A549 (cell line): ENCODE measurements at regions of chr2 and their contacts with region 1.

Region 1: DNA sequence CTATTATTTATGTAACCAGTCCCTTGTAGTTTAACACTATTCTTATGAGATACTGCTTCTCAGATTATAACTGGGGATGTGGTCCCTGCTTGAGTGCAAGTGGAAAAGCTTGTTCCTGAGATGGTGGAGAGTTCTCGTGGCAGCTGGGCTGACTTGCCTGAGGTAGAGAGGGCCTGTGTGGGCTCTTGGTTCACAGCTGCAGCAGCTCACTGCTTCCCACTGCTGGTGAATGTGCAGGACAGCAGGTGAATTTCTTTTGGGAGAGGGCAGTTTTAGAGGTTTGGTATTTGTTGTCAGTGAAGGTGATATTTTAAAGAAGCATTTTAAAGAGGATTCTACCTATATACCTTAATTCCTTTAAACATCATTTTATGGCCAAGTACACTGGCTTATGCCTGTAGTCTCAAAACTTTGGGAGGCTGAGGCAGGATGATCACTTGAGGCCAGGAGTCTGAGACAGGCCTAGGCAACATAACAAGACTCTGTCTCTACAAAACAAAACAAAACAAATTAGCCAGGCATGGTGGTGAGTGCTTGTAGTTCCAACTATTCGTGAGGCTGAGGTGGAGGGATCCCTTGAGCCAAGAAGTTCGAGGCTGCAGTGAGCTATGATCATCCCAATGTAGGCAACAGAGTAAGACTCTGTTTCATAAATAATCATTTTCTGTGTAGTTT is 94.8 kb downstream of the MTA3 start:
- DNase-seq: peak; percentile 78 to 81
- ATAC-seq: peak; percentile 97 to 98
- H3K4me3 ChIP-seq: no peak overlapping the region
- H3K27ac ChIP-seq: no peak overlapping the region
- H3K4me1 ChIP-seq: no peaks in the 10 kb centered on the region
- CTCF ChIP-seq: peak; percentile 99
- EP300 ChIP-seq: no peak
- POLR2A ChIP-seq: no peak
- RAD21 ChIP-seq: peak; percentile 94 to 95

Region 2: GRCh38 chr2:42494355-42495233 is 168.6 kb before region 1 on chr2:
- CTCF ChIA-PET with region 1: interaction called, 31 read pairs
- POLR2A ChIA-PET with region 1: interaction called, 3 read pairs
- DNase-seq: peak; percentile 78 to 91
- ATAC-seq: peak; percentile 67 to 85
- H3K4me3 ChIP-seq: peak overlapping the region; percentile 68
- H3K27ac ChIP-seq: peak overlapping the region; percentile 71 to 88
- H3K4me1 ChIP-seq: peaks cover 8% of the 10 kb centered on the region; the same call in 1 of the 3 replicates
- CTCF ChIP-seq: peak; percentile 98
- EP300 ChIP-seq: no peak
- POLR2A ChIP-seq: no peak
- RAD21 ChIP-seq: peak; percentile 87 to 89

Region 3: DNA sequence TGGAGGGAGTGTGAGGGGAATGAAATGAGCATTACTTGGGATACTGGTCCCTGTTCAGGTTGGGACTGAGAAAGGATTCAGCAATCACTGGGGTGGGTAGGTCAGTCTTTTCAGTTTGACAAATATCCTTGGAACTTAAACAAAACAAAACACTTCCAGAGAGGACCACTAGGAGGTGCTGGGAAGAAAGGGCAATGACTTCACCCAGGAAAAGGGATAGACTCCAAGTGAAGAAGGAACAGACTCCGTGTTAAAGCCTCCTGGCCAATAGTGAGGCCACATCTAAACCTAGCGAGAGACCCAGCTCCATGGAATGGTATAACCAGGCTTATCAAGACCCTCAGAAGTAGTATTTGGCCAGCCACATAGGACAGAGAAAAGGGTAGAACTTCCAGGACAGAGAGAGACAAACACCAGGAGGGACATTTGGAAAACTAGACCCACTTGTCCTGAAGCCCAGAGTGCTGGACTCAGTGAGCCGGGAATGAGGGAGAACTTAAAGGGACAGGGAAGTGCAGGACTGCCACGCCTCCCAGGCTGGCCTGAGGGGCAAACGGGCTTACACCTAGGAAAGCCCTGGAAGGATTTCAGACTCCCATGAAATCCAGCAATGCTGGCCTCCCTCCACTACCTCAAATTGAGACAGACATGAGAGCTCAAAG is 149.9 kb before region 1 on chr2:
- CTCF ChIA-PET with region 1: interaction called, 39 read pairs
- POLR2A ChIA-PET with region 1: no interaction called
- DNase-seq: peak; percentile 67 to 76
- ATAC-seq: peak; percentile 71 to 92
- H3K4me3 ChIP-seq: no peak overlapping the region
- H3K27ac ChIP-seq: no peak overlapping the region
- H3K4me1 ChIP-seq: no peaks in the 10 kb centered on the region
- CTCF ChIP-seq: peak; percentile 63
- EP300 ChIP-seq: no peak
- POLR2A ChIP-seq: no peak
- RAD21 ChIP-seq: peak; percentile 58 to 70

Region 4: DNA sequence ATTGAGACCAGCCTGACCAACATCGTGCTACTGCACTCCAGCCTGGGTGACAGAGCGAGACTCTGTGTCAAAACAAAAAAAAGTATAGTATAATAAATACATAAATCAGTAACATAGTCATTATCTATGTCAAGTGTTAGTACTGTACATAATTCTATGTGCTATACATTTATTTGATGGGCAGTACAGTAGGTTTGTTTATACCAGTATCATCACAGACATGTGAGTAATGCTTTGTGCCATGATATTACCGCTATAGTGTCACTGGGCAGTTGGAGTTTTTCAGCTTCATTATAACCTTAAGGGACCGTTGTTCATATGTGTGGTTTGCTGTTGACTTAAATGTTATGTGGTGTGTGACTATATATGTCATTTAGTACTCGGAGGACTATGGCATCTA is 70.0 kb before region 1 on chr2:
- CTCF ChIA-PET with region 1: interaction called, 10 read pairs
- POLR2A ChIA-PET with region 1: no interaction called
- DNase-seq: no peak
- ATAC-seq: no peak
- H3K4me3 ChIP-seq: no peak overlapping the region
- H3K27ac ChIP-seq: no peak overlapping the region
- H3K4me1 ChIP-seq: no peaks in the 10 kb centered on the region
- CTCF ChIP-seq: no peak
- EP300 ChIP-seq: no peak
- POLR2A ChIP-seq: no peak
- RAD21 ChIP-seq: no peak

Region 5: GRCh38 chr2:42613281-42614064 is 49.8 kb before region 1 on chr2:
- CTCF ChIA-PET with region 1: no interaction called
- POLR2A ChIA-PET with region 1: no interaction called
- DNase-seq: no peak
- ATAC-seq: no peak
- H3K4me3 ChIP-seq: no peak overlapping the region
- H3K27ac ChIP-seq: no peak overlapping the region
- H3K4me1 ChIP-seq: peaks cover 16% of the 10 kb centered on the region
- CTCF ChIP-seq: no peak
- EP300 ChIP-seq: no peak
- POLR2A ChIP-seq: no peak
- RAD21 ChIP-seq: no peak

Region 6: GRCh38 chr2:42652086-42652485 is 11.2 kb before region 1 on chr2:
- CTCF ChIA-PET with region 1: interaction called, 44 read pairs
- POLR2A ChIA-PET with region 1: no interaction called
- DNase-seq: no peak
- ATAC-seq: no peak
- H3K4me3 ChIP-seq: no peak overlapping the region
- H3K27ac ChIP-seq: no peak overlapping the region
- H3K4me1 ChIP-seq: no peaks in the 10 kb centered on the region
- CTCF ChIP-seq: no peak
- EP300 ChIP-seq: no peak
- POLR2A ChIP-seq: no peak
- RAD21 ChIP-seq: no peak

Region 7: DNA sequence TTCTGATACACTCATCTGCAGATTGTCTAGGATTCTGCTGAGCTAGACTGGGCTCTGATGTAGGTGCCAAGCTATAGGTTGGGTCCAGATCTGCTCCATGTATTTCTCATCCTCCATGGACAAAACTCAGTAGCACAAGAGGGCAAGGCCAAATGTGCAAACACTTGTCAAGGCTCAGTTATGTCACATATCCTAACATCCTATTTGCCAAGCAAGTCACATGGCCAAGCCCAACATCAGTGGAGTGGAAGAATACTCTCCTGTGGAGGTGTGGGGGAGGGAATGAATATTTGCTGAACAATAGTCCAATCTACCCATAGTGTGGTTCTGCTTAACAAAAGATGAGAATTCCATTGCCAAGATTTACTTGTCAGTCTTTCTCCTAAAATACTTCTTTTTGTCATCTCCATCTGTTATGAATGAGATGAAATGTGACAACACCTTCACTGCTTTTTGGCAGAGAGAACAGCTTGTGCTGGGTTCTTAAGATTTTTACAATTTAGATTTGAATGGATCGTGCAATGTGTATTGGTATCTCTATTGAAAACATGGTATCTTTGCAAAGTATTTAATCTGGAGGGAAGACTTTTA is 10.8 kb after region 1 on chr2:
- CTCF ChIA-PET with region 1: interaction called, 30 read pairs
- POLR2A ChIA-PET with region 1: no interaction called
- DNase-seq: no peak
- ATAC-seq: no peak
- H3K4me3 ChIP-seq: no peak overlapping the region
- H3K27ac ChIP-seq: no peak overlapping the region
- H3K4me1 ChIP-seq: peaks cover 3% of the 10 kb centered on the region; the same call in 1 of the 3 replicates
- CTCF ChIP-seq: no peak
- EP300 ChIP-seq: no peak
- POLR2A ChIP-seq: no peak
- RAD21 ChIP-seq: no peak

Region 8: DNA sequence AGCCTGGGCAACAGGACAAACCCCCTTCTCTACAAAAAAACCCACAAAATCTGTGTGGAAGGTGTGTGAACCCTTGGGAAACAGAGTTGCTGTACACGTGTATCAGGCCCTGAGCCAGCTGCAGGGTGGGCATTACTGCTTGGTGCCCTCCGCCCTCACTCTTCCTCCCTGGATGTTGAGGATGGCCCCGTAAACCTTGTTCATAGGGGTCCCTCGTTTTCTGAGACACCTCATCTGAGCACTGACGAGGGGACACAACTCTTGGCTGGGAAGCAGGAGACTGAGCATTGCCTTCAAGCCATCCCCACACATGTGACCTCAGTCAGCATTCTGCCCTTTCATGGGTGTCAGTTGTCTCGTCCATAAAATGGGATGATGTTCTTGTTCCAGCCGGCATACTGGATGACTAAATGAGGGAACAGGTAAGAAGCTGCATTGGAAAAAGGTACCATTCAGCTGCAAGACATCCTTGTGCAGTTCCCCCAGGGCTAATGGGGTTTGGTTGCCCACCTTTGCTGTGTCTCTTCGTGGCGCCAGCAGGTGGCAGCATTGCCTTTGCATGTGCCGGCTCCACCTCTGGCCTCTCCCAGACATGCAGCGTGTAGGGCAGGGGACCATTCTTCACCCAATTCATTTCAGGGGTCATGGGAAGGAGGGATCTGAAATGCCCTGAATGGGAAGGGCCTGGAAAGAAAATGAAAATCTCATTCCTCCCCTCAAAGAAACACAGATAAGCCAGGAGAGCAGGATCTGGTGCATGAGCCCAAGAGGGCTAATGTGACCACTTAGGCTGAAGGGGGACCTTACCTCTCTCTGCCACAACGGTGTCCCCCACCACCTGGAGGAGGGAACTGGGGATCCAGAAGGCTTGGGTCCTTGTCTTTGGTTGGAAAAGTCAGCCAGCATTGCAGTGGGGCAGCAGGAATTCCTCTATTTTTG is 165.5 kb after region 1 on chr2:
- CTCF ChIA-PET with region 1: no interaction called
- POLR2A ChIA-PET with region 1: no interaction called
- DNase-seq: peak; percentile 80 to 96
- ATAC-seq: peak; percentile 89 to 96
- H3K4me3 ChIP-seq: no peak overlapping the region
- H3K27ac ChIP-seq: peak overlapping the region; percentile 9 to 57; a peak in 5 of 6 replicates
- H3K4me1 ChIP-seq: peaks cover 15% of the 10 kb centered on the region
- CTCF ChIP-seq: peak; percentile 93
- EP300 ChIP-seq: no peak
- POLR2A ChIP-seq: no peak
- RAD21 ChIP-seq: peak; percentile 87 to 93